Activated naive CD4-positive, alpha-beta T cell treated with anti-CD3 and anti-CD28 coated beads for 36 hours (primary cell): ENCODE measurements at regions of chrX and their contacts with region 1.

Region 1: DNA sequence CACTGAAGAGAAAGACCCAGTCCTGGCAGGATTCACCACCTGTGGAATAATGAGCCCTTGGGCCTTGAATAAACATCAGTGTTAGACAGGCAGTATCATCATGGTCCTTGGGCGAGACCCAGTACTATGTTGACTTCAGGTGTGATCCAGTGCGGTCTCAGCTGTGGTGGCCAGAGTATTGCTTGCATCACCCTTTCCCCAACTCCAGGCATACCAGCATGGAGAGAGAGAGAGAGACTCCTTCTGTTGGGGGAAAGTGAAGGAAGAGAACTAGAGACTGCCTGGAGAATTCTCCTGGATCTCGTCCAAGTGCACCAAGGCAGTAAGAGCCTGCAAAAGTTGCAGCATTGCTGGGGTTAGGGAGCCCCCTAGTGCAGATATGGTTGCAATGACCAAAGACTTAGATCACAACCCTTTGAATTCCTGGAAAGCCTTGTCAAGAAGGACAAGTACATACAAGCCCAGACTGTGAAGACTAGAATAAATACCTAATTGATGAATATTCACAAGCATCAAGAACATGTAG is 61.1 kb upstream of the VAMP7 start:
- DNase-seq: peak; percentile 66
- H3K4me3 Mint-ChIP-seq: no peak overlapping the region
- H3K27ac Mint-ChIP-seq: no peak overlapping the region
- H3K4me1 Mint-ChIP-seq: no peaks in the 10 kb centered on the region
- H3K27me3 Mint-ChIP-seq: peaks cover 12% of the 10 kb centered on the region

Region 2: GRCh38 chrX:155662282-155662681 is 157.7 kb before region 1 on chrX:
- CTCF ChIA-PET with region 1: no interaction called
- intact Hi-C with region 1: loop called (anchors 10 kb)
- DNase-seq: no peak
- H3K4me3 Mint-ChIP-seq: no peak overlapping the region
- H3K27ac Mint-ChIP-seq: no peak overlapping the region
- H3K4me1 Mint-ChIP-seq: no peaks in the 10 kb centered on the region
- H3K27me3 Mint-ChIP-seq: no peaks in the 10 kb centered on the region